ENCODE measurements at regions of chr6 and their contacts with region 1.

Region 1: DNA sequence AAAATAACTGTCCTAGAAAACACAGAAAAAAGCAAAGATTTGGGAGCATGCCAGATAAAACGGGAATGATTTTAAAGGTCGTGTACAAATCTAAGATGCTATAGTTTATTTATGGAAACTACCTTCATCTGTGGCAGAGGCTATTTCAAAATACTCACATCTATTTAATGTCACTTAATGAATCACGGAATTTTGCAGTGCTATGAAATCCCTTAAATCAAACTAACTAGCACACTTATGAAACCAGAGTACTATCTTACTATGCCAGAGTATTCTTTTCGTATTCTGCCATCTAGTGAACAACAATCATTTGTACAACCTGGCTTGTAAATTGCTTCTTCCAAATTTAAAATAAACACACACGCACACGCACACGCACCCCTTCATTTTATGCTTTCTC is 77.9 kb upstream of the BMP5 start:
- DNase-seq: no peak
- H3K4me3 ChIP-seq: peak overlapping the region; percentile 13 to 37 (median 22)
- H3K27ac ChIP-seq: no peak overlapping the region
- H3K4me1 ChIP-seq: peaks cover 0 to 11% (median 0%) of the 10 kb centered on the region in 4 donors
- H3K27me3 ChIP-seq: no peaks in the 10 kb centered on the region
- CTCF ChIP-seq: peak; percentile 39 to 51 (median 51)
- EP300 ChIP-seq: no peak
- POLR2A ChIP-seq: no peak

Region 2: GRCh38 chr6:55276745-55277530 is 676.4 kb before region 1 on chr6:
- intact Hi-C with region 1: loop called (anchors 10 kb)
- DNase-seq: no peak
- H3K4me3 ChIP-seq: no peak overlapping the region
- H3K27ac ChIP-seq: no peak overlapping the region
- H3K4me1 ChIP-seq: peaks cover 0 to 3% (median 1%) of the 10 kb centered on the region in 4 donors
- H3K27me3 ChIP-seq: no peaks in the 10 kb centered on the region
- CTCF ChIP-seq: peak; percentile 43 to 52 (median 43)
- EP300 ChIP-seq: no peak
- POLR2A ChIP-seq: no peak

Region 3: DNA sequence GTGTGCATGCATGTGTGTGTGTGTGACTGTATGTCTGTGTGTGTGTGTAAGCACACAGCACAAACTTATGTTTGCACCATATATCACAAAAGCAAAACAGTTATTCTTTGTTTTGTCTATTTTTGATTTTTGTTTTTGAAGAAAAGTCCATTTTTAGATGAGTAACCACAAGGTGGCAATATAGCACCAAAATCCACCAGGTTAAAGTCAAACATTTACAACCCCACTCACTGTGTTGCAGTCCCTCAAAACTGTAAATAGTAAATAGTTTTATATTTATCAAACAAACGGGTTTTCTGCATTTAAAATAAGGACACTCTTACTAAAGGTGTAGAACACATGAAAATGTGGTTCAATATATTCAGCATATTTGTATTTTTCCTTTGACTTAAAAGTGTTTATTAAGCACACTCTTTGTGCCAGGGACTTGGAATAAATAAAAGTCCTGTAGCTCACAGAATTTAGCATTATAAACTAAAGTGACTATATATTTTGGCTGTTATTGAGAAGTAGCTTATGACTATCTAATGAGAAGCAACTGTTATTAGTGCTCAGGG is 507.6 kb before region 1 on chr6:
- intact Hi-C with region 1: loop called (anchors 2 kb)
- DNase-seq: no peak
- H3K4me3 ChIP-seq: no peak overlapping the region
- H3K27ac ChIP-seq: no peak overlapping the region
- H3K4me1 ChIP-seq: peaks cover 0 to 12% (median 7%) of the 10 kb centered on the region in 4 donors
- H3K27me3 ChIP-seq: no peaks in the 10 kb centered on the region
- CTCF ChIP-seq: peak; percentile 47 to 61 (median 50)
- EP300 ChIP-seq: no peak
- POLR2A ChIP-seq: no peak

Measured in esophagus muscularis mucosa (tissue), 4 donors.